ENCODE measurements at regions of chr4 and their contacts with region 1.

Region 1: DNA sequence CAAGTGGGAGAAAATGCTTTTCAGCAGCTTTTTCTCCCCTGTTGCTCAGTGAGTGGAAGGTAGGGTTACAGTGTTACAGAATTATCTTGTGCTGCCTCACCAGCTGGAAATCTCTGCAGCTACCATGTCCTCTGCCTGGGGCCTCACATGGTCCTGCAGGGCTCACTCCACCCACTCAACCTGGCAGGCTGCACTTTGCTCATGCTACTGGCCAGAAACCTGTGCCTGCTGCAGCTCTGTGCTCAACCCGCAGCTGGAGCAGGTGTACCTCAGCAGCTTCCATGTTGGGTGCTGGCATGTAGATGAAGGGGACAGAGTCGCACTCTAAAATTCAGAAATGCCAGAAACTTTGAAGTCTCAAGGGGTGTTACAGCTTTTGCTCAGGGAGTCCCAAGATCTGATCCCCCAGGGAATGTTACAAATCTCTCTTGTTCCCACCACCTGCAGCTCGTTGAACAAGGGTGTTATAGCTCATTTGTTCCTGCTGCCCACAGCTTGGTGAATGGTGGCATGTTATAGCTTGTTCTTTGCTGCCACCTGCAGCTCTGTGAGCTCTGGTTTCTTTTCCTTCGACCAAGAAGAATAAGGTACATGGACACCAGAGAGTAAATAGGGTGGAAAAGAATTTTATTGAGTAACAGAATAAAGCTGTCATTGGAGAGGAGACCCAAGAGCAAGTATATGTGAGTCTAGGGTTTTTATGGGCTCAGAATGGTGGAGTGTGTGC is 845.8 kb downstream of the TECRL start:
- DNase-seq: peak; percentile 41
- H3K4me3 Mint-ChIP-seq: no peak overlapping the region
- H3K27ac Mint-ChIP-seq: no peak overlapping the region
- H3K4me1 Mint-ChIP-seq: no peaks in the 10 kb centered on the region
- H3K27me3 Mint-ChIP-seq: no peaks in the 10 kb centered on the region
- CTCF ChIP-seq: no peak

Region 2: DNA sequence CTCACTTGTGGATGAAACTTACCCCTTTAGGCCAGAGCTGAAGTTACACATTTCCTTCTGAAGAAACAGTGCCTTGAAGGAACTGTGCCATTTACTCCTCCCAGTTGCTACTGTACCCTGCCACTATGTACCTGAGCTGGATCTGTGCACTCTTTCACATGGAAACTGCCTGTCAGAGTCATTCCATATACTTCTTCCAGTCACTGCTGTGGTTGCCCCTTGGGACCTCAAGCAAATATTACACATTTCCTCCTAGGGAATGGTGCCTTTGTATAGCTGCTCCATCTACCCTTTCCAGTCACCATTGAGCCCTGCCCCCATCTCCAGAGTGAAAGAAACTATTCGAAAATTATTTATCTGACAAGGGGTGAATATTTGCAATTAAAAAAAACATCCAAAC is 482.5 kb before region 1 on chr4:
- CTCF ChIA-PET with region 1: no interaction called
- POLR2A ChIA-PET with region 1: no interaction called
- intact Hi-C with region 1: no loop called
- DNase-seq: no peak
- H3K4me3 Mint-ChIP-seq: no peak overlapping the region
- H3K27ac Mint-ChIP-seq: no peak overlapping the region
- H3K4me1 Mint-ChIP-seq: no peaks in the 10 kb centered on the region
- H3K27me3 Mint-ChIP-seq: no peaks in the 10 kb centered on the region
- CTCF ChIP-seq: no peak

Region 3: GRCh38 chr4:63275491-63275890 is 288.0 kb before region 1 on chr4:
- CTCF ChIA-PET with region 1: no interaction called
- POLR2A ChIA-PET with region 1: no interaction called
- intact Hi-C with region 1: no loop called
- DNase-seq: no peak
- H3K4me3 Mint-ChIP-seq: no peak overlapping the region
- H3K27ac Mint-ChIP-seq: no peak overlapping the region
- H3K4me1 Mint-ChIP-seq: no peaks in the 10 kb centered on the region
- H3K27me3 Mint-ChIP-seq: no peaks in the 10 kb centered on the region
- CTCF ChIP-seq: no peak

Region 4: DNA sequence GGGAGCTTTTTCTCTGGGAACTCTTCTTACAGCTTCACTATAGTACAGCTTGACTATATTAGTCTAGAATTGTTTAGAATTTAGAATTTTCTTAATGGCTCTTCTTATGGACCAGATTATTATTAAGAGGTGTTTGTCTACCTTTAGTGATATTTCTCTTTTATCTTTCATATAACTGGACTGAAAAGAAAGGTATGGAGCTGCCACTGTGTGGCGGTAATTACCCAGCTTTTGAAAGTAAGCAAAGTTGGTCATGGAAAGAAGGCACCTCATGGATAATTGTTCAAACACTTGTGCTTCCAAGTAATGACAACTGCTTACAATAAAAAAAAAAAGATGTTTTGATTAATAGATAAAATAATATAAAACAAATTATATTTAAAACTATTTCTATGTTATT is 266.7 kb before region 1 on chr4:
- CTCF ChIA-PET with region 1: interaction called, 30 read pairs
- POLR2A ChIA-PET with region 1: no interaction called
- intact Hi-C with region 1: no loop called
- DNase-seq: peak; percentile 38
- H3K4me3 Mint-ChIP-seq: no peak overlapping the region
- H3K27ac Mint-ChIP-seq: no peak overlapping the region
- H3K4me1 Mint-ChIP-seq: no peaks in the 10 kb centered on the region
- H3K27me3 Mint-ChIP-seq: no peaks in the 10 kb centered on the region
- CTCF ChIP-seq: peak; percentile 31

Region 5: GRCh38 chr4:63492515-63492914 is 70.9 kb before region 1 on chr4:
- CTCF ChIA-PET with region 1: no interaction called
- POLR2A ChIA-PET with region 1: no interaction called
- intact Hi-C with region 1: no loop called
- DNase-seq: no peak
- H3K4me3 Mint-ChIP-seq: no peak overlapping the region
- H3K27ac Mint-ChIP-seq: no peak overlapping the region
- H3K4me1 Mint-ChIP-seq: peaks cover 6% of the 10 kb centered on the region
- H3K27me3 Mint-ChIP-seq: no peaks in the 10 kb centered on the region
- CTCF ChIP-seq: no peak

Region 6: GRCh38 chr4:63580796-63581475 is 17.5 kb after region 1 on chr4:
- CTCF ChIA-PET with region 1: interaction called, 14 read pairs
- POLR2A ChIA-PET with region 1: no interaction called
- intact Hi-C with region 1: no loop called
- DNase-seq: no peak
- H3K4me3 Mint-ChIP-seq: no peak overlapping the region
- H3K27ac Mint-ChIP-seq: no peak overlapping the region
- H3K4me1 Mint-ChIP-seq: no peaks in the 10 kb centered on the region
- H3K27me3 Mint-ChIP-seq: no peaks in the 10 kb centered on the region
- CTCF ChIP-seq: no peak

Measured in MCF 10A (cell line).